Activated CD4-positive, alpha-beta T cell treated with anti-CD3 and anti-CD28 coated beads for 36 hours (primary cell): ENCODE measurements at regions of chrX and their contacts with region 1.

Region 1: DNA sequence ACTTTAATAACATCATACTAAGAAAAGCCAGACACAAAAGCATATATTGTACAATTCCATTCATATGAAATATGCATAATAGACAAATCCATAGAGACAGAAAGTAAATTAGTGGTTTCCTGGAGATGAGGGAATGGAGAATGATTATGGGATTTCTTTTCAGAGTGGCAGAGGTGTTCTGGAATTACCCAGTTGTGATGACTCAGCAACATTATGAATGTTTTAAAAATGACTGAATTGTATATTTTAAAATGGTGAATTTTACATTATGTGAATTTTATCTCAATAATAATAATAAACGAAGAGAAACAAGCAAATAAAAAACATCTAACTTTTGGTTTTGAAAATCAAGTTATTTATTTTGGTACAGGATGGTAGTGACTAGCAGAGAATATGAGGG is 11.2 kb downstream of the ZXDA start:
- DNase-seq: no peak
- ATAC-seq: no peak
- H3K4me3 Mint-ChIP-seq: no peak overlapping the region
- H3K27ac Mint-ChIP-seq: no peak overlapping the region
- H3K4me1 Mint-ChIP-seq: peaks cover 2% of the 10 kb centered on the region
- H3K27me3 Mint-ChIP-seq: no peaks in the 10 kb centered on the region

Region 2: DNA sequence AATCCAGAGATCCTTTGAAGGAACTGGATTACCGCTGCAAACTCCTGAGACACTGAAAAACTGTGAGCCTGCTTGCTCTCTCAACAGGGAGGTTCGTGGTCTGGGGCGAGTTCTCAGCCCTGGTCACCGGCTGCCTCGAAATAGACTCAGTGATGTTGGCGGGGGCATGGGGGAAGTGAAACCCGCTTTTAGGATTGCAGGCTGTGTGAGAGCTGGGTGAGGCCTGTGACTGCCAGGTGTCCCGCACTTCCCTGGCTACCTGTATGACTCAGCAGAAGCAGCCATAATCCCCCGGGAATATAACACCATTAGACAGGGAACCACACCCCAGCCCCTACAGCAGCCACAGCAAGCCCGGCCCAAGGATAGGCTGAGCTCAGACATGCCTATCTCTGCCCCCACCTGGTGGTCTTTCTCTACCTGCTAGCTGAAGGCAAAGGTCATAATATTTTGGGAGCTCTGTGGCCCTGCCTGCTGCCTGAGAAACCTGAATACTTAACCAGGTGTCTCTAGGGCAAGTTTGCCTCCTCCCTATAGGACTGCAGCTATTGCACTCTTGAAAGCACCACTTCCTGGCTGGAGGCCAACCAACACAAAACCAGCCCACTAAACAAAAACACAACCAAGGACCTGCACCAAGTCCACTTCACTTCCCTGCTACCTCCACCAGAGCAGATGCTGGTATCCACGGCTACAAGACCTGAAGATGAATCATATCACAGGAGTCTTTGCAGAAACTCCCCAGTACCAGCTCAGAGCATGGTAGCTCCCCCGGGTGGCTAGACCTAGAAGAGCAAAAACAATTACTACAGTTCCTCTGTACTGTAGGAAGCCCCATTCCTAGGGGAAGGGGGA is 1979.5 kb before region 1 on chrX:
- CTCF ChIA-PET with region 1: no interaction called
- POLR2A ChIA-PET with region 1: no interaction called
- intact Hi-C with region 1: loop called in 1 of 2 experiments (anchors 5 kb)
- DNase-seq: no peak
- ATAC-seq: no peak
- H3K4me3 Mint-ChIP-seq: no peak overlapping the region
- H3K27ac Mint-ChIP-seq: no peak overlapping the region
- H3K4me1 Mint-ChIP-seq: no peaks in the 10 kb centered on the region
- H3K27me3 Mint-ChIP-seq: no peaks in the 10 kb centered on the region

Region 3: GRCh38 chrX:57951666-57952319 is 52.7 kb after region 1 on chrX:
- CTCF ChIA-PET with region 1: no interaction called
- POLR2A ChIA-PET with region 1: no interaction called
- intact Hi-C with region 1: loop called in 1 of 2 experiments (anchors 10 kb)
- DNase-seq: no peak
- ATAC-seq: no peak
- H3K4me3 Mint-ChIP-seq: no peak overlapping the region
- H3K27ac Mint-ChIP-seq: no peak overlapping the region
- H3K4me1 Mint-ChIP-seq: no peaks in the 10 kb centered on the region
- H3K27me3 Mint-ChIP-seq: no peaks in the 10 kb centered on the region